Activated B cell treated with CpG ODN at 0.5 μM for 24 hours (primary cell): ENCODE measurements at regions of chr12 and their contacts with region 1.

Region 1: DNA sequence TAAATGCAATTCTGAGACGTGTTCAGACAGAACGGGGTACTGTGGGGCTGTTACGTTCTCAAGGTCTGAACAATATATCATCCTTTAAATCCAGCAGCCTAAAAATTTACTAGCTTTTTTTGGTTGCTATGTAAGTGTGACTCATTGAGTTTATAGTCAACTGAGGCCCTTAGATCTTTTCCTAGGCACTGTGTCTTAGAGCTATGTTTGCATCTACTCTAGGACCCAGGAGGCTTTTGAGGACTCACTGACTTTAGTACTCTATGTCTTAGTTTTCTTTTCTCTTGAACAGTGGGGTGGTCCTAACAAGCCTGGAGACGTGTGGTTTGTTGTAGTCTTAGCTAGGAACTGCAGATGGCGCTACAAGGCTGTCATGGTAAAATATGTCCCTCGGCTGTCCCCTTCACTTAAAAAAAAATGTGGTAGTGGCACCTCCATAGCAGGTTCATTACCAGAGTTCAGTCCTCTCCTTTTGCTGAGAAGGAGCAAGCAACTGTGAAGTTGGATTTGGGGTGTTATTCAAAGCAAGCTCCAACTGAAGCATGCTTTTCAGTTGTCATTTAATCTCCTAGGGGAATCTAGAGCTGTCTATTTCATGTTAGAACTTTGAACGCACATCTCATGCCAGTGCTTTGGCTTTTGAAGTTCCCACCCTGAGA is 8.7 kb upstream of the SPATS2 start:
- DNase-seq: no peak
- ATAC-seq: peak; percentile 96
- H3K4me3 Mint-ChIP-seq: no peak overlapping the region
- H3K27ac Mint-ChIP-seq: no peak overlapping the region
- H3K4me1 Mint-ChIP-seq: peaks cover 2% of the 10 kb centered on the region
- H3K27me3 Mint-ChIP-seq: peaks cover 13% of the 10 kb centered on the region
- CTCF ChIP-seq: no peak

Region 2: GRCh38 chr12:49331380-49332222 is 27.0 kb before region 1 on chr12:
- CTCF ChIA-PET with region 1: interaction called, 11 read pairs
- POLR2A ChIA-PET with region 1: no interaction called
- intact Hi-C with region 1: no loop called
- DNase-seq: no peak
- ATAC-seq: no peak
- H3K4me3 Mint-ChIP-seq: no peak overlapping the region
- H3K27ac Mint-ChIP-seq: no peak overlapping the region
- H3K4me1 Mint-ChIP-seq: peaks cover 16% of the 10 kb centered on the region
- H3K27me3 Mint-ChIP-seq: peaks cover 33% of the 10 kb centered on the region
- CTCF ChIP-seq: no peak

Region 3: GRCh38 chr12:49503674-49504180 is 145.1 kb after region 1 on chr12:
- CTCF ChIA-PET with region 1: interaction called, 345 read pairs
- POLR2A ChIA-PET with region 1: interaction called, 9 read pairs
- intact Hi-C with region 1: no loop called
- DNase-seq: no peak
- ATAC-seq: no peak
- H3K4me3 Mint-ChIP-seq: no peak overlapping the region
- H3K27ac Mint-ChIP-seq: no peak overlapping the region
- H3K4me1 Mint-ChIP-seq: peaks cover 5% of the 10 kb centered on the region
- H3K27me3 Mint-ChIP-seq: no peaks in the 10 kb centered on the region
- CTCF ChIP-seq: no peak

Region 4: DNA sequence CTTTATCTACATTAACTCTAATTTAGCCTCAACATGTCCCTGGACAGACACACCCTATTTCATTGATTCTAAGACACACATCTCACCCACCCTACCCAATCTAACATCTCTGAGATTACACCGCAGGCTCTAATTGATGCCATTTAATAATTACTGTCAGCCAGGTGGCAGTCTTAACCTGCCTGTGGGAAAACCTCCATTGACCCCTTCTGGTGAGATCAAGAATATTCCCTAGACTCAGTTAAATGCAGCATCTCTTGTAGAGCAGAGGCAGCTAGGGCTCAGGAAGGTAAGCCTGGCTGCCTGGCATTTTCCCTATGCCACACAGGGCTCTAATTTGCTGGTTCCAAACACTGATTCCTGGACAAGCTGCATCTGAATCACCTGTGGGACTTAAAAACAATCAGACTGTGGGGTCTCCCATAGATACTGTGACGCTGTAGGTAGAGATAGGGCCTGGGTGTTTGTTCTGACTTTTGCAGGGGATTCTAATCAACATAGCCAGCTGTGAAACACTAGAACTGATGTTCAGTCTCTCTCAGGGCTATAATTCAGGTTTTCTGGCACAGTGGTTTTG is 195.0 kb after region 1 on chr12:
- CTCF ChIA-PET with region 1: interaction called, 11 read pairs
- POLR2A ChIA-PET with region 1: interaction called, 4 read pairs
- intact Hi-C with region 1: no loop called
- DNase-seq: no peak
- ATAC-seq: peak; percentile 65
- H3K4me3 Mint-ChIP-seq: no peak overlapping the region
- H3K27ac Mint-ChIP-seq: no peak overlapping the region
- H3K4me1 Mint-ChIP-seq: peaks cover 4% of the 10 kb centered on the region
- H3K27me3 Mint-ChIP-seq: peaks cover 13% of the 10 kb centered on the region
- CTCF ChIP-seq: no peak